AG04450 (cell line): ENCODE measurements at regions of chr10 and their contacts with region 1.

Region 1: DNA sequence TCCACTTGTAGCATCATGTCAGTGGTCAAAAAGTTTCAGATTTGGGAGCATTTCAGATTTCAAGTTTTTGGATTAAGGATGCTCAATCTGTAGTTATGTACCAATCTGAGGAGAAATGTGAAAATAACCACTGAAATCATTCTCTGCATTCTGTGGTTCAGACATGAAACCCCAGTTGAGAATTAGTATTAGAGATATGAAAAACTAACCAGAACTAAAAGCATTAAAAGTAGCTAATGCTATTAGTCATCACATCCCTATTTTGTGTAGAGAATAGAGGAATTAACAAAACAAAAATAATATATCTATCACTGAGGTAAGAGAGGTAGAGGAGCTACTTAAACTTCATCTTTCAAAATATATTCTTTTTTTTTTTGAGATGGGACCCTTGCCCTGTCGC is 28.0 kb downstream of the MICU1 start:
- DNase-seq: no peak
- H3K4me3 ChIP-seq: no peak overlapping the region
- H3K27ac ChIP-seq: no peak overlapping the region
- H3K27me3 ChIP-seq: no peaks in the 10 kb centered on the region
- CTCF ChIP-seq: no peak

Region 2: DNA sequence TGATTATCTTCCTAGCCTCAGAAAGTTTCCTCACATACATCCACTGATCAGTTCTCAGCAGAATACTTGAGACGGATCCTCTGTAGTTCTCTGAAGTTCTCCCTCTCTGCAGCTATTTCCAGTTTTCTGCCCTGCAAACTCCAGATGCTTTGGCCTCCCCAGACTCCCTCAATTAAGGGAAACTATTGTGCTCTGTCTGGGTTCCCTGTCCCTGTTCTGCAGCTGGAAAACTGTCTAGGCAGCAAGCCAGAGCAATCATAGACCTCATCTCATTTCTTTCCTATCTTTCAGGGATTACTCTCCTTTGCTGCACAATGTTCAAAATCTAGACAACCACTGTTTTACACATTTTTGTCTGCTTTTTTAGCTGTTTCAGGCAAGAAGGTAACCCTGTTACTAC is 18.8 kb after region 1 on chr10:
- CTCF ChIA-PET with region 1: interaction called, 11 read pairs
- POLR2A ChIA-PET with region 1: interaction called, 3 read pairs
- DNase-seq: no peak
- H3K4me3 ChIP-seq: no peak overlapping the region
- H3K27ac ChIP-seq: no peak overlapping the region
- H3K27me3 ChIP-seq: no peaks in the 10 kb centered on the region
- CTCF ChIP-seq: no peak